B cell (primary cell): ENCODE measurements at regions of chr15 and their contacts with region 1.

Region 1: DNA sequence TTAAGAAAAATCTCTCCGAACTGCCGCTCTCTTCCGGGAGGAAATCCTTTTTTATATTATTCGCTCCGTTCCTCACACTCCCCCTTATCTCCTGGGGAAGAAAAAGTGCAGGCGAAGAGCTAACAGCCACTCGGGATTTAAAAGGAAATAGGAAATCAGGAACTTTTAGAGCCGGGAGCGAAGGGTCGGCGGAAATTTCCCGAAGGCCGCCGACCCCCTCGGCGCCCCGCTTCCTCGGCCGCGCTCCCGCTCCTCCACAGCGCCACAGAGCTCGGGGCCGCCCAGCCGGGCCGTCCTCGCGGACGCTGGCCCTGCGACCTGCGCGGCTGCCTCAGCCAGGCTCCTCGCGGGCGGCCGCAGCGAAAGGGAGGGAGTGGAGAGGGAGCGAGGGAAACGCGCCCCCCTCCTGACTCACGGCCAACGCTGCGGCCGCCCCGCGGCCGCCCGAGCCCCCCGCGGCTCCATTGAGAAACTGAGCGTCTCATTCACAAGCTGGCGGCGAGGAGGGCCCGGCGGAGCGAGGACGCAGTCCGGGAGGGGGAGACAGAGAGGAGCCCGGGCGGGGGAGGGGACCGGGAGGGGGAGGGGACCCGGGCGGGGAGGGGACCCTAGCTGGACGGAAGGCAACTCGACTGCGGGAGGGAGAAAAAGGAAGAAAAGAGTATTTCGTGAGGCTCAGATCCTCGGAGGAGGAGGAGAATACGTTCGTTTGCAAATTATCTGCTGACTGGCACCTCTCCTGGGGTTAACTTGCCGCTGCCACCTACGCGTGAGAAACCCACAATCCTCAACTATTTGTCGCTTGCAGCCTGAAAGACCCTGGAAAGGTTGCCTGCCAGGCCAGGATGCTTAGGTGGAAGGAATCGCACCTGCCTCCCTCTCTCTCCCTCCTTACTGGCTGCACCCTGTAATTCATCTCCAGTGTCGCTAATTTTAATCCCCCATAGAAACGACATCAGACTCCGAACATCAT is at the start of gene PTPN9:
- DNase-seq: peak; percentile 74
- ATAC-seq: peak; percentile 83
- H3K4me3 ChIP-seq: peak within 1 kb of the TSS; percentile 67 to 93 (median 70)
- H3K4me3 Mint-ChIP-seq: peak within 1 kb of the TSS; percentile 90
- H3K27ac ChIP-seq: peak within 1 kb of the TSS in 1 of 2 donors; percentile 76
- H3K27ac Mint-ChIP-seq: peak within 1 kb of the TSS; percentile 87
- H3K4me1 ChIP-seq: peaks cover 17 to 18% of the 10 kb centered on the region in 2 donors
- H3K4me1 Mint-ChIP-seq: peaks cover 20% of the 10 kb centered on the region
- H3K27me3 ChIP-seq: no peaks in the 10 kb centered on the region
- H3K27me3 Mint-ChIP-seq: no peaks in the 10 kb centered on the region
- CTCF ChIP-seq: peak; percentile 44
- total RNA-seq, gene PTPN9: 15.5 and 19.9 TPM in 2 replicates

Region 2: GRCh38 chr15:75625542-75626347 is 46.5 kb after region 1 on chr15 and contains the start of gene SNUPN:
- CTCF ChIA-PET with region 1: interaction called, 7 read pairs
- POLR2A ChIA-PET with region 1: interaction called, 4 read pairs
- intact Hi-C with region 1: loop called (anchors 1 kb)
- DNase-seq: peak; percentile 96
- ATAC-seq: peak; percentile 91
- H3K4me3 ChIP-seq: peak within 1 kb of the TSS; percentile 72 to 97 (median 93)
- H3K4me3 Mint-ChIP-seq: peak within 1 kb of the TSS; percentile 91
- H3K27ac ChIP-seq: peak within 1 kb of the TSS; percentile 91 to 97
- H3K27ac Mint-ChIP-seq: peak within 1 kb of the TSS; percentile 95
- H3K4me1 ChIP-seq: peaks cover 7 to 12% of the 10 kb centered on the region in 2 donors
- H3K4me1 Mint-ChIP-seq: peaks cover 13% of the 10 kb centered on the region
- H3K27me3 ChIP-seq: no peaks in the 10 kb centered on the region
- H3K27me3 Mint-ChIP-seq: no peaks in the 10 kb centered on the region
- CTCF ChIP-seq: no peak
- total RNA-seq, gene SNUPN: 19.6 and 23.5 TPM in 2 replicates

Region 3: GRCh38 chr15:75684642-75685041 is 105.4 kb after region 1 on chr15:
- CTCF ChIA-PET with region 1: no interaction called
- POLR2A ChIA-PET with region 1: no interaction called
- intact Hi-C with region 1: no loop called
- DNase-seq: no peak
- ATAC-seq: no peak
- H3K4me3 ChIP-seq: no peak overlapping the region
- H3K4me3 Mint-ChIP-seq: no peak overlapping the region
- H3K27ac ChIP-seq: no peak overlapping the region
- H3K27ac Mint-ChIP-seq: no peak overlapping the region
- H3K4me1 ChIP-seq: peaks cover 0 to 6% of the 10 kb centered on the region in 2 donors
- H3K4me1 Mint-ChIP-seq: peaks cover 8% of the 10 kb centered on the region
- H3K27me3 ChIP-seq: peaks cover 0 to 4% (median 0%) of the 10 kb centered on the region in 4 experiments
- H3K27me3 Mint-ChIP-seq: peaks cover 4% of the 10 kb centered on the region
- CTCF ChIP-seq: no peak